ENCODE measurements at regions of chr2 and their contacts with region 1.

Region 1: DNA sequence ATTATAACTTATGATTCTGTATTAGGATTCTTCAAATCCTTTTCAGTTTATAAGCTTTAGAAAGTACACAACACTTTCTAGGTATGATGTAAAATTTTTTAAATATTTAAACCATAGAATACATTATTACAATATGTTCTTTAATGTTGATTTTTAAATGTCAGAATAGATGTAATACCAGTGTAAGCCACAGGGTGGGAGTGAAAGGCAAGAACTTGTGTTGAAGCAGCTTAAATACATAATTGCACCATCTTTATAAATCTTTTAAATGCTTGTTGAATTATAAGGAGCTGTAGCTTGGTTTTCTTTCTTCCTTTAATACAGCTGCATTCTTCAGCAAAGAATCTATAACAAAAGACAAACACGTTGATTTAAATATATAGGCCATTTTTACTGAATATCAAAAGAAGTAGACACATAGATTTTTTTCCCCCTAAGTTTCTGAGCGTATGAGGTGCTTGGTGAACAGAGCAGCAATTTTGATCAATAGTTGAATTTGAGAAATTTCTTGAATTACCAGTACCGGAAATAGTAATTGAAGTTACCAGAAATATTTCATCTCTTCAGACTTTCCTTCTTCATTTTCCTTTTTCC is 63.0 kb downstream of the TANK start:
- DNase-seq: peak in 1 of 3 donors; percentile 39
- ATAC-seq: peak; percentile 60
- H3K4me3 ChIP-seq: no peak overlapping the region
- H3K4me1 ChIP-seq: no peaks in the 10 kb centered on the region
- CTCF ChIP-seq: no peak

Region 2: GRCh38 chr2:161273038-161273760 is 50.0 kb after region 1 on chr2:
- intact Hi-C with region 1: loop called in 1 of 2 experiments (anchors 10 kb)
- DNase-seq: peak in 1 of 3 donors; percentile 74
- ATAC-seq: peak; percentile 34
- H3K4me3 ChIP-seq: no peak overlapping the region
- H3K4me1 ChIP-seq: no peaks in the 10 kb centered on the region
- CTCF ChIP-seq: no peak

Region 3: GRCh38 chr2:161533218-161533617 is 310.0 kb after region 1 on chr2:
- intact Hi-C with region 1: no loop called
- DNase-seq: no peak
- ATAC-seq: no peak
- H3K4me3 ChIP-seq: no peak overlapping the region
- H3K4me1 ChIP-seq: no peaks in the 10 kb centered on the region
- CTCF ChIP-seq: no peak

Measured in mucosa of descending colon (tissue), 3 donors.